ENCODE measurements at regions of chr4 and their contacts with region 1.

Region 1: DNA sequence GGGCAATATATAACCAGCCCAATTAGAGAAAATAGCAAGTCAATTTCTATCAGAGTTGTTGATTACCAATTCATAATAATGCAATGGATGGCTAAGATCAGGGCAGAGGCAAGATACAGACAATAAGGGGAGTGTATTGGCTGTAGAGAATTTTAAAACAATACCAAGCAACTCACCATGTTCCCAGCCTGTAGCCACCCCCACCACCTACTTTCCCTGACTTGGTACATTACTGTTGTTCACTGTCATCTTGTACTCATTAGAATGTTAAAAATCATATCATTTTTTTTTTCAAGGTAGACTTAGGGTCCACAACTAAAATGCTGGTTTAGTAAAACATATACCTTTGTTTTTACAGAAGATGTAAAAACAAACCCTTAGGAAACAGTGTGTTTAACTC is 27.7 kb downstream of the HNRNPD start:
- DNase-seq: no peak
- H3K4me3 ChIP-seq: no peak overlapping the region
- H3K27ac ChIP-seq: no peak overlapping the region
- H3K4me1 ChIP-seq: peaks cover 0 to 16% (median 4%) of the 10 kb centered on the region in 4 donors
- H3K27me3 ChIP-seq: no peaks in the 10 kb centered on the region
- CTCF ChIP-seq: no peak
- EP300 ChIP-seq: no peak
- POLR2A ChIP-seq: no peak

Region 2: DNA sequence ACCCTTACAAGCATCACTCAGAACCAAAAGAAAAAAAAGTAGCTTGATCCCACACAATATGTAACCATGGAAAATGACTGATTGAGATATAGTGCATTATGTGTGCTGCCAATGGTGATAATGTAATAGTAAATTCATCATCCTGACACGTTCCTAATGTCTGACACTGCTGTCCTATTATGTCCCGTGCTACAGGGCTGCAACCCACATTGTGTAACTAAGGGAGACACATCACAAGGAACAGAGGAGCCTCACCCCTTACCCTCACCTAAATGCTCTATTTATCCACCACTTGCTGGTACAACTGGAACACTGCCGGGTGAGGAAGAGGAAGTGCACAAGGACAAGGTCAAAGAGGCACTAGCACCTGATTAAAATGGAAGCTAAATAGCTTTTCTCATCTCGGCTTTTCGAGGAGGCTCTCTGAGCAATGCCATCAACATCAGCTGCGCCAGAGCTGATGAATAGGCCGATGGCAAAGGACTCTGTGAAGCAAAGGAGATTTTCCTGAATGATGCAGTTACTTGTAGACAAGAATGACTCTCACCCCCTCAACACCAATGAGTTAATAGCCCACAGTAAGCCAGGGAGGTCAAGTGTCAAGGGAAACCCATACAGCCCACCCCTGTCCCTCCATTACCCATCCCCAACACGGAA is 154.0 kb before region 1 on chr4:
- intact Hi-C with region 1: no loop called
- DNase-seq: no peak
- H3K4me3 ChIP-seq: no peak overlapping the region
- H3K27ac ChIP-seq: no peak overlapping the region
- H3K4me1 ChIP-seq: no peaks in the 10 kb centered on the region
- H3K27me3 ChIP-seq: no peaks in the 10 kb centered on the region
- CTCF ChIP-seq: no peak
- EP300 ChIP-seq: no peak
- POLR2A ChIP-seq: no peak

Region 3: DNA sequence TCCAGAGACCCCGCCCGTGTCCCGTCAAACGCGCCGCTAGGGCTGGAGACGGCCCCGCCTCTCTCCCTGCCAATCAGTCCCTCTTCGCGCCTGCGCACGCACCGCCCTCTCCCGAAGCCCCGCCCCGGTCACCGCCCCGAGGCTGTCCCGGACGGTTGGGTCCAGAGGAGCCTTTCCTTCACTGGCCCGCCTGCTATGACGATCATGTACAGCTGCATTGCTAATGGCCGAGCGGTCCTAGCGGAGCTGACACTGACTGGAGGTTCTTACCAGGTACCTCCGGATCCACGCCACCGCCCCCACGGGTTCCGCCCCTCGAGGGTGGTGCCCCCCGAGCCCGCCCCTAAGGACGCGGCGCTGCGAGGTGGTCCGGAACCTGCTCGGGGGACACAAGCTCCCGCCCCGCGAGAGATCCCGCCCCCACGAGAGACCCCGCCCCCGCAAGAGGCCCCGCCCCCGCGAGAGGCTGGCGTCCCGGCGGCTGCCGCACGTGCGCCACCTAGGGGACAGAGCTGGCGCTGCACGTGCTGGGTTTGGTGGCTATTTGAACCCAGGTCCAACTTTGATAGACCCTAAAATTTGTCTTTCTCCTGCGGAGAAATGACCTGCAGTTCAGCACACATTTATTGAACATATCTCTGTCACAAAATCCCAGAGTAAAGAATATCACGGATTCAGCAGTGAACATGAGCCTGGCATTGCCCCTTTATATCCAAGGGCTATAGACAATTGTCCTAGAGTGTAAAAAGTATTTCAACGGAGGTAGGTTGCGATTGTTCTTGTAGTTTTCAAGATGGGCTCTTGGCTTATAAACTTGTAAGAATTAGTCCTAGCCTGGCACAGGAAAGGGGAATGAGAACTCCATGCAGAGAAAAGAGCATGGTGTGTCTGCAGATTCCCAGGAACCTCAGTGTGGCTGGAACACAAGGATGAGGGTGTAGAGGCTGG is 61.0 kb before region 1 on chr4:
- intact Hi-C with region 1: loop called (anchors 10 kb)
- DNase-seq: peak; percentile 99
- H3K4me3 ChIP-seq: peak overlapping the region; percentile 42 to 48 (median 44)
- H3K27ac ChIP-seq: peak overlapping the region; percentile 66 to 80 (median 75)
- H3K4me1 ChIP-seq: peaks cover 6 to 27% (median 17%) of the 10 kb centered on the region in 4 donors
- H3K27me3 ChIP-seq: no peaks in the 10 kb centered on the region
- CTCF ChIP-seq: peak in 5 of 7 experiments; percentile 48 to 99 (median 93)
- EP300 ChIP-seq: no peak
- POLR2A ChIP-seq: no peak

Measured in stomach (tissue), 19 donors.